Activated T-helper 2 cell treated with anti-CD3 and anti-CD28 coated beads, Interferon-gamma antibody, Interleukin-2, Interleukin-4, amounts not matched to agents 10 μg/mL and 5 μg/mL and 100 μg/mL, durations not matched to agents 14 hours and 24 hours and 36 hours (primary cell): ENCODE measurements at regions of chr1 and their contacts with region 1.

Region 1: DNA sequence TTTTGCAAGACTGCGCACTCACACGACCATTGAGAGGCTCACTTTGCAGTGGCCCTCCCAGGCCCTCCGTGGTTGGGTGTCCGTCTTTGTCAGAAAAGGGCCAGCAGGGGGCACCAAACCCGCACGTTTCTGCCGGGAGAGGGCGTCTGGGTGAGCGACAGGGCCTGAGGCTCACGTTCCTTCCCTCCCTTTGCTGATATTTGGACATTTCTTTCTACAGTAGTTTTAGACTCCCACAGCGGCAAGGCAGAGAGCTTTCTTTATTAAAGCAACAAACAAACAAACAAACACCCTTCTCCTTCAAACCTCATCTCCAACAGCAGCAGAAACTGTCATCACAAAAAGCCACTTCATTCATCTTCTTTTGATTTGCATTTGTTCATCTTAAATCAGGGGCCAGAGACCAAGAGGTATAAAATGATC is 79.2 kb upstream of the WDR26 start:
- DNase-seq: peak; percentile 76
- H3K4me3 Mint-ChIP-seq: no peak overlapping the region
- H3K27ac Mint-ChIP-seq: no peak overlapping the region
- H3K4me1 Mint-ChIP-seq: peaks cover 18% of the 10 kb centered on the region
- H3K27me3 Mint-ChIP-seq: no peaks in the 10 kb centered on the region

Region 2: DNA sequence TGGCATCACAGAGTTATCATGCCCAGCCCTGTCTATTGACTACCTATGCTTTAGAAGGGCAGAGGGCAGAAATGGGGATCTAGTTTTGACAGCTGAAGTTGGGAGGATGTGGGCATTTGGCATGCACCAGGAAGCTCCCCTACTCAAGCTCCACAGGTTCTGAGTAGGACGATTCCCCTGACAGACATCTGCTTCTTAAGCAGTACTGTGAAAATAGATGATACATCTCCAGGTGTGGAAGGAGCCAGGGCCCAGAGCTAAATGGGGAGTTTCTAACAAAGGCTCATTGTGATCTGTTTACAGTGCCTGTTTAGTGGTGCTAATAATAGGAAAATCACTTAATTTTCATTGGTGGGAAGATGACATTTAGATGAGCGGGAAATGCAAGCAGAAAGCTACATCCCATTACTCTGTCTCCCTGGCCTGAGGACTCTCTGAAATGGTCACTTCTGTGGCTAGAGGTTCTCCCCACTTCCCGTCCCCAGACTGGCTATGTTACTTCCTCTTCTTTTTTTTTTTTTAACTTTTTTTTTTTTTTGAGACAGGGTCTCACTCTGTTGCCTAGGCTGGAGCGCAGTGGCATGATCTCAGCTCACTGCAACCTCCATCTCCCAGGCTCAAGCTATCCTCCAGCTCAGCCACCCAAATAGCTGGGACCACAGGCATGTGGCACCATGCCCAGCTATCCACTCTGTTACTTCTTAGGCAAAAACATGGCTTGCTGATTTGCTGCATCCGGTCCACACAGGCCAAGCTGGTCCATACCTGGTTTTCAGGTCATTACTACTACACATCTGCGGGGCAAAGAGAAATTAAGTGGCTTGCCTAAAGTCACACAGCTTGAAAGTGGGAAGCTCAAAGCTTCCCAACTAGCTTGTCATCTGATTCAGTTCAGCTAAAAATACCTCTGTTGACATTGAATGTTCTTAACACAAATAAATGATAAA is 79.1 kb after region 1 on chr1:
- intact Hi-C with region 1: no loop called
- DNase-seq: no peak
- H3K4me3 Mint-ChIP-seq: no peak overlapping the region
- H3K27ac Mint-ChIP-seq: no peak overlapping the region
- H3K4me1 Mint-ChIP-seq: peaks cover 9% of the 10 kb centered on the region
- H3K27me3 Mint-ChIP-seq: peaks cover 7% of the 10 kb centered on the region

Region 3: GRCh38 chr1:224623743-224624333 is 110.0 kb after region 1 on chr1:
- intact Hi-C with region 1: loop called (anchors 5 kb)
- DNase-seq: peak; percentile 86
- H3K4me3 Mint-ChIP-seq: peak overlapping the region; percentile 65
- H3K27ac Mint-ChIP-seq: peak overlapping the region; percentile 91
- H3K4me1 Mint-ChIP-seq: peaks cover 39% of the 10 kb centered on the region
- H3K27me3 Mint-ChIP-seq: peaks cover 28% of the 10 kb centered on the region

Region 4: DNA sequence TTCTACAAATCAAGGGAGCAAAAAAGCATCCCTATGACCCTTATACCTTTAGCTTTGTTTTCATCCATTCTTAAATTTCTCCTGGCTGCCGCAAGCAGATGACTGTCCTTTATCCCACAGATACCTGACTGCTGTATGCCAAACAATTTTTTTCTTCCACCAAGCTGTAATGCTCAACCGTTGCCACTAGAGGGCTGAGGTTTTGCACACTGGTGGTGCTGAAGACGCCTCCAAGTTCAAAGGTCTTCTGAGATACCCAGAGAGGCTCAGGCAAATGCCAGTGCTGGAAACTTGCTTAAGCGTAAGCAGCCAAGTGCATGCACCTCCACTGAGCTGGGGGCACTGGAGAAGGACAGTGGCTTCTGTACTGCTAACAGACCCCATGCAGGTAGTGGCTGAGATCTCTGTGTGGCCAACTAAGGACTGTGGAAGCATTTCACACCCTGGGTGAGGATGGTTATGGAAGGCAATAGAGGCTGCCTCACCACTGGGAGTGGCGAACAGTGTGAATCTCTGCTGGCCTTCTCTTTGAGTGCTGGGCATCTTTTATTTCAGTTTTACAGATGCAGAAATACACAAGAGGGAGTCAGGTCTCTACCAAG is 130.9 kb after region 1 on chr1:
- intact Hi-C with region 1: loop called (anchors 5 kb)
- DNase-seq: peak; percentile 45
- H3K4me3 Mint-ChIP-seq: no peak overlapping the region
- H3K27ac Mint-ChIP-seq: no peak overlapping the region
- H3K4me1 Mint-ChIP-seq: peaks cover 2% of the 10 kb centered on the region
- H3K27me3 Mint-ChIP-seq: peaks cover 13% of the 10 kb centered on the region

Region 5: DNA sequence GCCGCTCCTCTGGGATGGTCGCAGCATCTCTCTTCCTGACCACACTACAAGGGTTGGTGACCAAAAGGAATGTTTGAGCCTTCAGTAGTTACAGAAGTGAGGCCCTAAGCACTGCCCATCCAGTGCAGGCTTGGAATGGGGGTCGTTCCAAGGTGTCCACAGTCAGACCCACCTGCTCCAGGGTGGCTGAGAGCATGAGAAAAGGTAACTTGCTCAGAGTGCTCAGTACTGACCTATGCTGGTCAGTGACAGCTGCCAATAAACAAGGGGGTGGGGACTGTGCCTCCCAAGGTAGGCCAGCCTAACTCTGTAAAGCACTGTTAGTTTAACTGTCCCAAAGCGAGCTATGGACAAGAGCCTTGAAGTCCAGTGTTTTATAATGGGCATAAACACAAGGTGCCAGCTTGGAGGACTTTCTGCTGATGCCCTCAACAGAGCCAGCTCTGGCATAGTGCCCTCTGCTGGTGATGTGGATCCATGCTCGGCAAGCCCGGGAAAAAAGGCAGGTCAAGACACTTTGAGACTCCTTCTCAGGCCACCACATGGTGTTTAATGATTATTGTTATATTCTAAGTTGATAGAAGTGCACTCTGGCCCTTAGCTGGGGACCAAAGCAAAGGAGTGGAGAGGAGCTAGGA is 337.5 kb after region 1 on chr1:
- intact Hi-C with region 1: loop called (anchors 1 kb)
- DNase-seq: peak; percentile 37
- H3K4me3 Mint-ChIP-seq: no peak overlapping the region
- H3K27ac Mint-ChIP-seq: no peak overlapping the region
- H3K4me1 Mint-ChIP-seq: no peaks in the 10 kb centered on the region
- H3K27me3 Mint-ChIP-seq: no peaks in the 10 kb centered on the region

Region 6: DNA sequence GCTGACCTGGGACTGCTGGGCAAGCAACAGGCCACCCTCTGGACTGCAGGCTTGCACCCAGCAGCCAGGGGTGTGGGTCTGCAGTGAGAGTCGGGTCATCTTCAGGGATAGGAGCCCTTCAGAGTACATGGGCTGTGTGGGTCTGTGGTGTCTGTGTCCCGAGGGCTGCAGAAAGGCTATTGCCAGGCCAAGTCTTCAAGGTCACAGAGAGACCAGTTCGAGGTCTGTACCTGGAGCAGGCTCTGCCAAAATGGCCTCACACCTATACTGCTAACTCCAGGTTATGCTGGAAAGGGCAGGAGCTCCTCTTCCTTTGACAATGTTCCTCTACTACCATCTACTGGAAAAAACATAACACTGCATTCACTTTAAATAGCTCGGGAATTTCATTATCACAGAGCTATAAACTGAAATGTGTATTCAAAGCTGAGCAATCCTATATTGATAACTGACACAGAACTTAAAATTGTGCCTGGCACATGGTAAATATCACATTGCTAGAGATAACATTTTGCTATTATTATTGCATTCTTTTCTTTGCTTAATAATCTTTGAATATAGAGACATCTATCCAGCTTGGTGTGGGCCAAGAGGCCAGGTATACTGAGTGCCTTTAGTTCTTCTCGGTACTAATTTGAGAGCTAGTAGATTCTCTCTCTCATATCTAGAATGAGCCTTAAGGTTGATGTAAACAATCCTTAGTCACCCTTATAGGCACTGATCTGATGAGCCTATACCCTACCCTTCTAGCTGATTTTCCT is 408.8 kb after region 1 on chr1:
- intact Hi-C with region 1: loop called (anchors 2 kb)
- DNase-seq: no peak
- H3K4me3 Mint-ChIP-seq: no peak overlapping the region
- H3K27ac Mint-ChIP-seq: no peak overlapping the region
- H3K4me1 Mint-ChIP-seq: no peaks in the 10 kb centered on the region
- H3K27me3 Mint-ChIP-seq: peaks cover 3% of the 10 kb centered on the region